ENCODE measurements at regions of chr1 and their contacts with region 1.

Region 1: DNA sequence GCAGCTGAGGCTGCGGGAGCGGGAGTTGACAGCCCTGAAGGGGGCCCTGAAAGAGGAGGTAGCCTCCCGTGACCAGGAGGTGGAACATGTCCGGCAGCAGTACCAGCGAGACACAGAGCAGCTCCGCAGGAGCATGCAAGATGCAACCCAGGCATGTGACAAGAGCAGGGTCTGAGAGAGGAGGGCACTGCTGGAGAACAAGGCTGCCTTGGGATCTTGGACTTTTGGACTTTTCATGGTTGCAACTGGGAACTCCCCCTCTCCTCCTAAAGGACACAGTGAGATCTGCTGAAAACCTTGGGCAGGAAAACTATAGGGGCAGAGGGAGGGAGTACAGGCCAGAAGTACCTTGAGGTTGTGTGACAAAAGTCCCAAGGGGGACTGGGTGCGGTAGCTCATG is 13.5 kb downstream of the CGN start:
- DNase-seq: no peak
- ATAC-seq: no peak
- H3K4me3 ChIP-seq: no peak overlapping the region
- H3K27ac ChIP-seq: no peak overlapping the region
- H3K4me1 ChIP-seq: no peaks in the 10 kb centered on the region
- H3K27me3 ChIP-seq: no peaks in the 10 kb centered on the region
- CTCF ChIP-seq: no peak

Region 2: GRCh38 chr1:151475175-151475574 is 49.6 kb before region 1 on chr1:
- intact Hi-C with region 1: no loop called
- DNase-seq: no peak
- ATAC-seq: no peak
- H3K4me3 ChIP-seq: no peak overlapping the region
- H3K27ac ChIP-seq: no peak overlapping the region
- H3K4me1 ChIP-seq: no peaks in the 10 kb centered on the region
- H3K27me3 ChIP-seq: no peaks in the 10 kb centered on the region
- CTCF ChIP-seq: no peak

Region 3: DNA sequence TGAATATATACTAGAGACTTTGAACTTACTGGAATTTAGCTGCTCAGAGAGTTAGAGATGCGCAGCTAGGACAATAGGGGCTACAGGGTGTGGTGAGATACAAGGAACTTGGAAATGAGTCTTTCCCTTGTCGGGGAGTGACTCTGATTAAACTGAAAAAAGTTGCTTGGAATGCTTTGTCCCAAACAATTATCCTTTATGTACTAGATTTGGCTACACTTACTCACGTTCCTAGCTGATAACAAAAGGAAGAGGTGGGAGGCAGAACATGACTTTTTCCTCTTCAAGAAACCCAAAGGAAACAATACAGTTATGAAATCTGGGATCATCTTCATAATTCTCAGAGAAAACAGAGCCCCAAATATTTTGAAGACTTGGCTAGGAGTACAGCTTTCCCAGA is 20.5 kb before region 1 on chr1:
- intact Hi-C with region 1: loop called in 1 of 2 experiments (anchors 2 kb)
- DNase-seq: no peak
- ATAC-seq: no peak
- H3K4me3 ChIP-seq: no peak overlapping the region
- H3K27ac ChIP-seq: no peak overlapping the region
- H3K4me1 ChIP-seq: no peaks in the 10 kb centered on the region
- H3K27me3 ChIP-seq: no peaks in the 10 kb centered on the region
- CTCF ChIP-seq: no peak

Region 4: GRCh38 chr1:152001391-152002249 is 476.9 kb after region 1 on chr1:
- intact Hi-C with region 1: no loop called
- DNase-seq: peak; percentile 88 to 89
- ATAC-seq: peak; percentile 74 to 87 (median 76)
- H3K4me3 ChIP-seq: no peak overlapping the region
- H3K27ac ChIP-seq: peak overlapping the region; percentile 18
- H3K4me1 ChIP-seq: peaks cover 3% of the 10 kb centered on the region
- H3K27me3 ChIP-seq: peaks cover 0 to 11% (median 0%) of the 10 kb centered on the region in 3 donors
- CTCF ChIP-seq: peak; percentile 88

Measured in psoas muscle (tissue), 8 donors.